HEK293T (cell line): ENCODE measurements at regions of chr6 and their contacts with region 1.

Region 1: DNA sequence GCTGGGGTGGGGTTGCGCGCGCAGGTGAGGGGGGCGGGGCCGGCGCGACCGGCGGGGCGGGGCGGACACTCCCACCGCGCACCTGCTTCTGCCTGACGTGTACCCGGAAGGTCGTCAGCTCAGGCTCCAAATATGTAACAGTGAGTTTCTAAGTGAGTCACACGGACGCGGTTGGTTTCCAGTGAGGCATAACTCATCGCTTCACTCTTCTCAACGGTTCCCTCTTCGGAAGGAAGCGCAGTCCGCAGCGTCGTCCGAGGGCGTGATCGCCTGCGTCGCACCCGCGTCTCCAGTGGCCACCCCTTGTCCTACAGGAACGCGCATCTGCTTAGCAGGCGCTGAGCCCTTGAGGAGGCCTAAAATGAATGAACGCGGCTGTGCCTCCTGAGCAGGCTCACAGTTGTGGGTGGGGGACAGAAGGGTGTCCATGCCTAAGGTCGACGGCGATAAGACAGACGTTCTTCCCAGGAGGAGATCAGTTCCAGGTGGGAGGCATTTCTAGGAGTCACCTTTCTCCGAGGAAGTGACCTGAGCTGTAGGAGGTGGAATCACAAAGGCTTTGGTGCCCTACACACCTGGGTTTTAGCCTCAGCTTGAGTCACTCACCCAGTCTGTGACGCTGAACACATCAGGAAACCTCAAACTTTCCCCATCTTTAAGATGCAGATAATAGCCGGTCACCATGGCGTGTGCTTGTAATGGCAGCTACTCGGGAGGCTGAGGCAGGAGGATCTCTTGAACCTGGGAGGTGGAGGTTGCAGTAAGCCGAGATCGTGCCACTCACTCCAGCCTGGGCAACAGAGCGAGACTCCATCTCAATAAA is 50.9 kb upstream of the EZR start:
- DNase-seq: no peak

Region 2: DNA sequence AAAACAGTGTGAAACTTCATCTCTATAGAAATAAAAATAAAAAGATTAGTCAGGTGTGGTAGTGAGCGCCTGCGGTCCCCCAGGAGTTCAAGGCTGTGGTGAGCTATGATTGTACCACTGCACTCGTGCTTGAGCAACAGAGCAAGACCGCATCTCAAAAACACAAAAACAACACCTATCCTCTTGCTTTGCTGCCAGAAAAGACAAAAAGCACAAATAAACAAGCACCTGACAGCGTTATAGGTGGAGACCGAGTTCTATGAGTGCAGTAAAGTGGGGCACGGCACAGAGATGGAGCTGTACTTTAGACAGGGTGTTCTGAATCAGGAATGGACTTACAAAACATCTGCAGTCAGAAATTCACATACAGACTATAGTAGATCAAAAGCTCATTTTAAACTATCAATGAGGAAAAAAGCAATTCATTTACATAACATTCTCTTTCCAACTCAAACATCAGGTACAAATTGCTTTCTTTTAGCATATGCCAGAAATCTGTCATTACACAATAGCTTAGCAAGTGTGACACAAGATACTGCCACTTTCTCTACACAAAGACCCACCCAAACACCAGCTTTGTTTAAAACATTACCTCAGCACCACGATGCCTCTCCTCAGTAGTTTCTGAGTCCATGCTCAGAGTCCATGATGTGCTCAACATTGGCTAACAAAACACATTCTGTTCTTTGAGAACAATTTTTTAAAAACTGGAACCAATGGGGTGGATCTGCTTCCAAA is 60.9 kb before region 1 on chr6:
- CTCF ChIA-PET with region 1: interaction called, 11 read pairs
- POLR2A ChIA-PET with region 1: interaction called, 4 read pairs
- DNase-seq: no peak

Region 3: DNA sequence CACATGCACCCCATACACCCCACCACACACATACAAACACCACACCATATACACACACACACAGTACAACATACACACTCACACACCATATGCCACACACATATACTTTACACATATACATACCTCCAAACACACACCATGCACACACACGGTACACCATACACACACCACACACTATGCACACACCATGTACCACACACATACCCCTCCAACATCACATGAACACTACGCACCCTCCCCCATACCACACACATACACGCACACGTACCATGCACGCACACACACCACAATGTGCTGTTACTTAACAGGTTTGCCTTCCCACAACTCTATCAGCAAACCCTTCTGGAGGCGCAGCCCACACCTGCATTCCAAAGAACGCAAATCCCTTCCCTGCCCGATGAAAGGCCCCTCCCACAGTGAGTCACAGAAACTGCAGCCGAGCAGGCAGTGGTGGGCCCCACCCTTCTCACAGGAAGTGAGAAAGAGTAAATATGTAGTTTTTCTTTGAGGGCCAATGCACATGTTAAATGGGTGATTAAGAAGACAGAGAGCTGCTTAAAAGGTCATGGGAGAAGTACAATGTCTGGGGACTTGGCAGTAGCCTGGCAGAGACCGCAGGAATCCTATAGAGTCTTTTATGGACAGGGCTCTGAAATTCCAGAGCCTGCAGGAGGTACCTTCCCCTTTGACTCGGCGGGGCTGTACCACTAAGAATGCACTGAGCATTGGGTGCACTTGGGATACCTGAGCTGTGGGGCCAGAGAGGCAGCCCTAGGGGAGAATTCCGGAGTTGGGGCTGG is 16.8 kb before region 1 on chr6:
- CTCF ChIA-PET with region 1: no interaction called
- POLR2A ChIA-PET with region 1: interaction called, 10 read pairs
- DNase-seq: peak; percentile 61

Region 4: DNA sequence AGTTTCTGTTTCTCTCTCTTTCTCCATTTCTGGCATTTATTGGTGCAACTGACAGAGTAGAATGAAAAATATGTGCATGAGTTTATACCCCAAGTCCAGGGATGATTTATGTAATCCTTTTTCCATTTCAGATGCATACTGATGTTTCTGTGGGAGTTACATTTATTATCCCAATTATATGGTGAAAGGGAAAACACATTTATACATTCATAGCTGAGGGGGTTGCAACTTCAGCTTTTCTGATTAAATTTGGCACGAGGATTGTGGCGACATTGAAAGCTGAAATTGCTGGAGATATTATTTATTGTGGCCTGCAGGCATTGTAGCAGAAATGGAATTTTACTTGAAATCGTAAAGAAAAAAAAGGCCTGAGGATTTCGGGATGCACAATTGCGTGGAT is 267.6 kb after region 1 on chr6:
- CTCF ChIA-PET with region 1: no interaction called
- POLR2A ChIA-PET with region 1: no interaction called
- DNase-seq: no peak